Activated CD8-positive, alpha-beta memory T cell treated with anti-CD3 and anti-CD28 coated beads, Interleukin-2, amount 10 ng/mL, durations not matched to agents 7 days and 5 days (primary cell): ENCODE measurements at regions of chr1 and their contacts with region 1.

Region 1: DNA sequence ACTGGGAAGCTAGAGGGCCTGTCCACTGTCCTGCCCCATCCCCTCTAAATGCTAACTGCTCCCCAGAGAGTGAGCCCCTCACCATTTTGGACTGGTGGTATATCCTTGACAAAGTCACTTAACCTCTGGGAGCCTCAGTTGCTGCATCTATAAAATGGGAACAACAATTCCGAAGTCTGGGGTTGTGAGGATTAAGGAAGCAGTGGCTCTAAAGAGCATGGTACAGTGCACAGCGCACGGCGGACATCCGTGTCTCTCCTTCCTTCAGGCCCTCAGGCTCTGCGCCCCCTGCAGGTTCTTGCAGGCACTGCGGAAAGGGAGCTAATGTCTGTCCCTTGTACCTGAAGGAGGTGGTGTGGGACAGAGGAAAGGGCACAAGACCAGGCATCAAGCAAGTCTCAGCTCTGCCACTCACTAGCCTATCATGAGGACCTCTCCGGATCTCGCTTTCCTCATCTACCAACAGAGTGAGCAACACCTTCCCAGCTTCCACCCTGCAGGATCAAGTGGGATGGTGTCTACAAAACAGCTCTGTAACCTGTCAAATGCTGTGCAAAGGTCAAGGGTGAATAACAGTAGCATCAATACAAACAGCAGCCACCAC is 20.1 kb downstream of the ECE1 start:
- DNase-seq: peak; percentile 85
- ATAC-seq: peak; percentile 82
- H3K4me3 Mint-ChIP-seq: no peak overlapping the region
- H3K27ac Mint-ChIP-seq: no peak overlapping the region
- H3K4me1 Mint-ChIP-seq: peaks cover 4% of the 10 kb centered on the region
- H3K27me3 Mint-ChIP-seq: no peaks in the 10 kb centered on the region

Region 2: GRCh38 chr1:21232044-21232443 is 38.1 kb before region 1 on chr1:
- CTCF ChIA-PET with region 1: interaction called, 23 read pairs
- DNase-seq: no peak
- ATAC-seq: peak; percentile 69
- H3K4me3 Mint-ChIP-seq: no peak overlapping the region
- H3K27ac Mint-ChIP-seq: no peak overlapping the region
- H3K4me1 Mint-ChIP-seq: no peaks in the 10 kb centered on the region
- H3K27me3 Mint-ChIP-seq: no peaks in the 10 kb centered on the region

Region 3: GRCh38 chr1:21244986-21245687 is 25.1 kb before region 1 on chr1:
- CTCF ChIA-PET with region 1: interaction called, 14 read pairs
- DNase-seq: no peak
- ATAC-seq: no peak
- H3K4me3 Mint-ChIP-seq: no peak overlapping the region
- H3K27ac Mint-ChIP-seq: no peak overlapping the region
- H3K4me1 Mint-ChIP-seq: peaks cover 2% of the 10 kb centered on the region
- H3K27me3 Mint-ChIP-seq: no peaks in the 10 kb centered on the region

Region 4: DNA sequence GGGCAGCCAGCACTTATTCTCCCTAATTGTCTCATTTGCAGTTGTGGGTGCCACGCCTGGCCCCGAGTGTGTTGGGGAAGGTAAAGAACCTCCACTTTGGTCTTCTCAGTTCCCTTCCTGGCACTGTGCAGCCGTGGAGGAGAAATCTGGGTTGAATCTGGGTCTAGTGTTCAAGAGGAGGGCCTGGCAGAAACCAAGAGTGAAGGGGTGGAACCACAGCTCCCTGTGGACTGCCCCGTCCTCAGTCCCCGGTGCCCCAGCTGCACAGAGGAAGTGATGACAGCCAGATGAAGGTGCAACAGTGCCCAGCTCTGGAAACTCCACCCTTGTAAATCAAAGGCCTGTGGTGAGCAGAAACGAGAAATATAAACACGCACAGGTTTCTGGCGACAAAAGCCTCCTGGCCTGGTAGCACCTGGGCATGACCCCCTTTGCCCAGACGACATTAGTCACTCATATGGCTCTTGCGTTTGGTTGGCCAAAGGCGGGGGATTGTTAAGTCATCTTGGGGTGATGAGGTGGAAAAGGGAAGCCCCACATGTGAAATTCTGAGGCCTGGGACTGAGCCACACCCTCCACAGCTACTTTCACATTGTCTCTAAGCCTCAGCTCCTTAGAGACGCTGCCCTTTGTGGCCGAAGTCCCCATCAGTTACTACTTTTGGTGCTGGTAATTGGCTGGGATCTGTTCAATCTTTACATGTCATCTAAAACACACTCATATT is 24.2 kb after region 1 on chr1:
- CTCF ChIA-PET with region 1: interaction called, 60 read pairs
- DNase-seq: peak; percentile 90
- ATAC-seq: peak; percentile 67
- H3K4me3 Mint-ChIP-seq: peak overlapping the region; percentile 73
- H3K27ac Mint-ChIP-seq: peak overlapping the region; percentile 98
- H3K4me1 Mint-ChIP-seq: peaks cover 80% of the 10 kb centered on the region
- H3K27me3 Mint-ChIP-seq: no peaks in the 10 kb centered on the region

Region 5: DNA sequence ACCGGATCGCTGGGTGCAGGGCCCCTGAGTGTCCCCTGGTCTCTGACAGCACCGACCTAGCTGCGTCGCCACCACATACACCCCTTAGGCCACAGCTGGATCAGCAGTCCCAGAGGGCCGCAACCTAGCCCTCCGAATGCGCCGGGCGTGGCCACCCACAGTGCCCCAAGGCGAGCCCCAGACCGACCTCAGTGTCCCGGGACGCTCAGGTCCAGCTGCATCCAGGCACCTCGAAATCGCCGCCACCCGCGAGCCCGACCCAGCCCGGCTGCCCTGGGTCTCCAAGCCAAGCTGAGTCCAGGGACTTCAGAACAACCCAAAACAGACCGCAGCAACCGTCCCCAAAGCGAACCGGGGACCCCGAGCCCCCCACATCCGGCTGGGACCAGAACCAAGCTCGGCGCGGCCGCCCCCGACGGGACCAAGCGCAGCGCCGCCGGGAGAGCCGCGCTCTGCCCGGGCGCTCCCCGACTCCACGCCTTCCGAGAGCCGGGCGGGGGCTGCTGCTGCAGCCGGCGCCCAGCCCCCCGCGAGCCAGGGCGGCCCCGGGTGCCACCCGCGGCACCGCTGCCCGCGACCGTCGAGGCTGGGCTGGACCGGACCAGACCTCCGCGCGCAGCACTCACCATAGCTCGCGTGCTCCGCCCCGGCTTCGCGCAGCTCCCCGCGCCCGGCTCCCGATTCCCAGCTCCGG is 74.7 kb after region 1 on chr1:
- CTCF ChIA-PET with region 1: interaction called, 19 read pairs
- DNase-seq: peak; percentile 57
- ATAC-seq: peak; percentile 24
- H3K4me3 Mint-ChIP-seq: peak overlapping the region; percentile 87
- H3K27ac Mint-ChIP-seq: peak overlapping the region; percentile 93
- H3K4me1 Mint-ChIP-seq: peaks cover 41% of the 10 kb centered on the region
- H3K27me3 Mint-ChIP-seq: no peaks in the 10 kb centered on the region

Region 6: DNA sequence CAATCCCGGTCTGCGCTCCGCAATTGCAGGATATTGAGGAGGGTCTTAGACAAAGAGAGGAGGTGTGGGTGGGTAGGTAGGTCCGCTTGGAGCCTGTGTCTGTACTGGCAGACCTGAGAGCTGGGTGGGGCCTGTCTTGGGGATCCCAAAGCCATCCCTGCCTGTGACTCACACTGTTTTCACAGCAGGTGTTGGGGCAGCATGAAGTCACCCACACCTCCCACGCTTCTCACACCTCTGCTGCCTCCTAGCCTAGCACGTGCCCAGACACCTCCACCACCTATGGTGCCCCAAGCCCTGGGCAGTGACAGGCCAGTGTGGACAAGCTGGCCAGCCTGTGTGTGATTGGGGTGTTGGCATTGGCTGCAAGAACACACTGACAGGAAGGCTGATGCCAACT is 85.8 kb after region 1 on chr1:
- CTCF ChIA-PET with region 1: interaction called, 12 read pairs
- DNase-seq: no peak
- ATAC-seq: no peak
- H3K4me3 Mint-ChIP-seq: no peak overlapping the region
- H3K27ac Mint-ChIP-seq: no peak overlapping the region
- H3K4me1 Mint-ChIP-seq: no peaks in the 10 kb centered on the region
- H3K27me3 Mint-ChIP-seq: peaks cover 4% of the 10 kb centered on the region